ENCODE measurements at regions of chr3 and their contacts with region 1.

Region 1: DNA sequence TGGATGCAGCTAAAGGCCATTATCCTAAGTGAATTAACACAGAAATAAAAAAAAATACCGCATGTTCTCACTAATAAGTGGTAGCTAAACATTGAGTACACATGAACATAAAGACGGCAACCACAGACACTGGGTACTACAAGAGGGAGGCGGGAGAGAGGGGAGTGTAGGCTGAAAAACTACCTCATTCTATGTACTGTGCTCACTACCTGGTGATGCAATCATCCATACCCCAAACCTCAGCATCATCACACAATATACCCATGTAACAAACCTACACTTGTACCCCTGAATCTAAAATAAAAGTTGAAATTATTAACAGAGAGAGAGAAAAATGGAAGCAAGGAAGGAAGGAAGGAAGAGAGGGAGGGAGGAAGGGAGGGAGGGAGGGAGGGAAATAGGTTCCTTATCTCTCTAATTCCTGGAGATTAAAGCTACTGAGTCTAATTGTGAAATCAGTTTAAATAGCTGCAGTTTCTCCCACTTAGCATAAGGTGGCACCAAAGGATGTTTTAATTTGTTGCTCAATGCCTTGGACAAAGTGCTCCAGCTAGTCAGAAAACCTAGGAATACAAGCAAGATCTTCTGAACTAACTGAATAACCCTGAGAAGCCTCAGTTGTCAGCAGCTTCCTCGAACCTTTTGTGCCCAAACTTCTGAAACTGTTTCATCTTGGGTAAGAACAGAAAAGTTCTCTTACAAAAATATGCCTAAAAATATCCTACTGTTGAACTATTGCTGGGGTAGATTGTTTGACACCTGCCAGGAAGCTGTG is 79.4 kb upstream of the ATP11B start:
- DNase-seq: no peak
- ATAC-seq: peak; percentile 80 to 84
- H3K4me3 ChIP-seq: no peak overlapping the region
- H3K27ac ChIP-seq: no peak overlapping the region
- H3K4me1 ChIP-seq: no peaks in the 10 kb centered on the region
- H3K27me3 ChIP-seq: no peaks in the 10 kb centered on the region

Region 2: DNA sequence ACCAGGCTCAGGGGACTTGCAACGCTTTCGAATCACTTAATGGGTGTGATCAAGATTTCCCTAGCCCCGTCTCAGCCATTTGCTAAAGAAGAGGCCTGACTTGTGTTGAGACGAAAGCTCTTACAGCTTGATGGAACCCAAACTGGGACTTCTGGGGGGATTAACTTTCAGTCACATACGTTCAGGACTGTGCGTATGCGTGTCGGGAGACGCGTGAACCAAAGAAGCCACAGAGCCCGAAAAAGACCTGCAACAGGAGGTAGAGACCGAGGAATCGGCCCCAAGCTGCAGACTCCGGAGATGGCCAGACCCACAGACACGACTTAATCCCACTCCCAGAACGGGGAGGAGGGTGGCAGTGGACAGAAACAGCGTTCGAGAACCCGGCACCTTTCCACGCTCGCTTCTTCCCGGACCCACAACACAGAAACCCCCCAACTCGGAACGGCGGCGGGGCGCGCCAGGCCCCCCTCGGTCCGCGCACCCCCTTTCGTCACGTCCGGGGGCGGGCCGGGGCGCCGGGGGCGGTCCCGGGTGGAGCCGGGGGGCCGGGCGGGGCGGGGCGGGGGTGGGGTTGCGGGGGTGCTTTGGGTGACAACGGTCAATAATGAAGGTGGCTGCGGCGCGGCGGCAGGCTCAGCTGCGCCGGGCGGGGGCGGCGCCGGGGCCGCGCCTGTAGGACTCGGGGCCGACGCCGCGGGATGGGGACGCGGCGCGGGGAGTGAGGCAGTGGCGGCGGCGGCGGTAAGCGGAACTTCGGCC is 79.2 kb after region 1 on chr3 and contains the start of gene ATP11B:
- intact Hi-C with region 1: loop called in 1 of 4 experiments (anchors 10 kb)
- DNase-seq: peak; percentile 69 to 91 (median 90)
- ATAC-seq: peak; percentile 95 to 96
- H3K4me3 ChIP-seq: peak within 1 kb of the TSS; percentile 91
- H3K27ac ChIP-seq: peak within 1 kb of the TSS; percentile 86
- H3K4me1 ChIP-seq: no peaks in the 10 kb centered on the region
- H3K27me3 ChIP-seq: no peaks in the 10 kb centered on the region
- total RNA-seq, gene ATP11B: 34.9 to 43.6 (median 38.7) TPM

Region 3: GRCh38 chr3:182837855-182838454 is 124.0 kb after region 1 on chr3:
- intact Hi-C with region 1: loop called in 3 of 4 experiments (anchors 5 to 10 kb)
- DNase-seq: no peak
- ATAC-seq: no peak
- H3K4me3 ChIP-seq: no peak overlapping the region
- H3K27ac ChIP-seq: no peak overlapping the region
- H3K4me1 ChIP-seq: no peaks in the 10 kb centered on the region
- H3K27me3 ChIP-seq: no peaks in the 10 kb centered on the region

Region 4: GRCh38 chr3:182843478-182843877 is 129.5 kb after region 1 on chr3:
- intact Hi-C with region 1: loop called in 3 of 4 experiments (anchors 5 to 10 kb)
- DNase-seq: no peak
- ATAC-seq: no peak
- H3K4me3 ChIP-seq: no peak overlapping the region
- H3K27ac ChIP-seq: no peak overlapping the region
- H3K4me1 ChIP-seq: no peaks in the 10 kb centered on the region
- H3K27me3 ChIP-seq: no peaks in the 10 kb centered on the region

Measured in right cardiac atrium (tissue), 5 donors.